Tibial artery (tissue), 4 donors: ENCODE measurements at regions of chr7 and their contacts with region 1.

Region 1: DNA sequence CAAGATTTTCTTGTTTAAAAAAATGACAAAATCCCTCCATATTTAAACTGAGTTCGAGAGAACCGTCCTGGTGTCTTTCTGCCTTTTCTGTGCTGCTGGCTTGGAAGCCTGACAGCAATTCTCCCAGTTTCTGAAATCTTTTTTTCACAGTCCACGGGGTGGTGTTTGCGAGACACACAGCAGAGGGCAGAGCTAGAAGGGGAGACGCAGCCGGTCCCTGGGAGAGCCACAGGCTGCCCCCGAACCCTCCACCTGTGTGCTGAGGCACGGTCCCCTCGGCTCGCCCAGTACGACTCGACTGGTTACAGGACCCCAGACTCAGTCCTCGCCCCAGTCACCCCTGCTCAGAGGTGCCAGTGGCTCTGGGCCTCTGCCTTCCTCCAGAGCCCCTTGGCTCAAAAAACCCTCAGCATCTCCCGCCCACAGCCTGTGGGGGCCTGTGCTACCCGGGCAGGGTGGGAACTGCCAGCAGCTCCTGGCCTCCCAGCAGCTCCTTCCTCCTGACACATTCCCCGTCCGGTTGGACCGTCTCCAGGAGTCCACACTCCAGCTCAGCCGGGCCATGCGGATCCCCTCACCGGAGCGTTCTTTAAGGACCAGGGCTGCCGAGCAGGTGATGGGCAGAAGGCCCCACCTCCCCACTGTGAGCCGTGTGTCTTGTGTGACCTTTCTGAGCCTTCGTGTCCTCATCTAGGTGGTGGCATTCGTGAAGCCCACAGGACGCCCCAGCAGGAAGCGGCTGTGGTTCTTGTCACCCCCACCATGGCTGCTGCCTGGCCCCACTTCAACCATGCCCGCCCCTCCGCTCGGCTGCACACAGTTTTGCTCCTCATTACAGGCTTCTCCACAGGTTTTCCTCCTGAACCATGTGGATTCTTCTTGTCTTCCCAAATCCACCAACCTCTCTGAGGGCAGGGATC is 52.3 kb upstream of the EN2 start:
- DNase-seq: no peak
- H3K4me3 ChIP-seq: no peak overlapping the region
- H3K27ac ChIP-seq: no peak overlapping the region
- H3K4me1 ChIP-seq: peaks cover 0 to 4% (median 0%) of the 10 kb centered on the region in 4 donors
- H3K27me3 ChIP-seq: peaks cover 0 to 70% of the 10 kb centered on the region in 2 donors
- CTCF ChIP-seq: no peak

Region 2: GRCh38 chr7:154178890-154179289 is 1226.8 kb before region 1 on chr7:
- intact Hi-C with region 1: no loop called
- DNase-seq: no peak
- H3K4me3 ChIP-seq: no peak overlapping the region
- H3K27ac ChIP-seq: no peak overlapping the region
- H3K4me1 ChIP-seq: no peaks in the 10 kb centered on the region
- H3K27me3 ChIP-seq: no peaks in the 10 kb centered on the region
- CTCF ChIP-seq: no peak

Region 3: GRCh38 chr7:155344600-155345433 is 60.8 kb before region 1 on chr7:
- intact Hi-C with region 1: no loop called
- DNase-seq: peak; percentile 60 to 84
- H3K4me3 ChIP-seq: peak overlapping the region; percentile 24 to 46
- H3K27ac ChIP-seq: no peak overlapping the region
- H3K4me1 ChIP-seq: peaks cover 0 to 16% (median 9%) of the 10 kb centered on the region in 4 donors
- H3K27me3 ChIP-seq: peaks cover 0 to 37% of the 10 kb centered on the region in 2 donors
- CTCF ChIP-seq: peak; percentile 88 to 92

Region 4: GRCh38 chr7:155438777-155439176 is 33.1 kb after region 1 on chr7:
- intact Hi-C with region 1: loop called (anchors 1 kb)
- DNase-seq: no peak
- H3K4me3 ChIP-seq: no peak overlapping the region
- H3K27ac ChIP-seq: no peak overlapping the region
- H3K4me1 ChIP-seq: no peaks in the 10 kb centered on the region
- H3K27me3 ChIP-seq: peaks cover 0 to 71% of the 10 kb centered on the region in 2 donors
- CTCF ChIP-seq: no peak